ENCODE measurements at regions of chr2 and their contacts with region 1.

Region 1: DNA sequence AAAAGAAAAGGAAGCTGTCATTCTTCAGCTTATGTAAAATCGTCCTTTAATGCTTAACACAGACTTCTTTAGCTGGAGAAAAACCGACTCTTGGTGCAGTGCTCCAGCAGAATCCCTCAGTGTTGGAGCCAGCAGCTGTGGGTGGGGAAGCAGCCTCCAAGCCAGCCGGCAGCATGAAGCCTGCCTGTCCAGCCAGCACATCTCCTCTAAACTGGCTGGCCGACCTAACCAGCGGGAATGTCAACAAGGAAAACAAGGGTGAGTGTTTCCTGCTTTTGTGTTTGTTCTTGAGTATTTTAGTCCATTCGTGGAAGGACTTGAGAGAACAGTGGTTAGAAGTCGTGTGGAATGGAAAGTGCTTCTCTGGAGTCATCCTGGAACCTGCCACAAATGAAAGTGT is 38.9 kb downstream of the KDM3A start:
- DNase-seq: no peak
- ATAC-seq: no peak
- H3K4me3 ChIP-seq: no peak overlapping the region
- H3K4me3 Mint-ChIP-seq: no peak overlapping the region
- H3K27ac ChIP-seq: no peak overlapping the region
- H3K27ac Mint-ChIP-seq: peak overlapping the region in 7 of 9 donors; percentile 5 to 64 (median 12)
- H3K4me1 ChIP-seq: no peaks in the 10 kb centered on the region
- H3K4me1 Mint-ChIP-seq: peaks cover 2 to 55% (median 24%) of the 10 kb centered on the region in 7 donors
- H3K27me3 ChIP-seq: no peaks in the 10 kb centered on the region
- H3K27me3 Mint-ChIP-seq: no peaks in the 10 kb centered on the region

Region 2: DNA sequence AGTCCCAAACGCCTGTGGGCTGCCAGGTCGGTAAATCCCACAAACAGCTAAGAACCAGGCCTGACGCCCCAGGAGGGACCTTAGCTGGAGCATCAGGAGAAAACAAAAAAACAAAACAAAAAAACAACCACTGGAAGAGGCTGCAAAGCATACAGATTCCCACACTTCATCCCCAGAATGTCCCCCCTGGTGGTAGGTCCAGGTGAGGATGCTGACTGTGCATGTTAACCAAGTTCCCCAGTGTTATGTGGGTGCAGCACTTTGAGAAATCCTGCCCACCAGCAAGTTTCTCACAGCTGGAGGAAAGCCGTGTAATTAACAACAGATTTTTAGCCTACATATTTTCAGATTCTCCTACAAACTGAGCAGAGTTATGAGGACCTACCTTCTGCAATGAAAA is 606.4 kb before region 1 on chr2:
- CTCF ChIA-PET with region 1: no interaction called
- POLR2A ChIA-PET with region 1: no interaction called
- intact Hi-C with region 1: no loop called
- DNase-seq: no peak
- ATAC-seq: no peak
- H3K4me3 ChIP-seq: no peak overlapping the region
- H3K4me3 Mint-ChIP-seq: no peak overlapping the region
- H3K27ac ChIP-seq: no peak overlapping the region
- H3K27ac Mint-ChIP-seq: peak overlapping the region in 4 of 9 donors; percentile 17 to 78 (median 50)
- H3K4me1 ChIP-seq: peaks cover 0 to 16% of the 10 kb centered on the region in 2 donors
- H3K4me1 Mint-ChIP-seq: peaks cover 34 to 83% (median 71%) of the 10 kb centered on the region in 7 donors
- H3K27me3 ChIP-seq: no peaks in the 10 kb centered on the region
- H3K27me3 Mint-ChIP-seq: no peaks in the 10 kb centered on the region

Region 3: GRCh38 chr2:86347401-86347800 is 132.7 kb before region 1 on chr2:
- CTCF ChIA-PET with region 1: no interaction called
- POLR2A ChIA-PET with region 1: no interaction called
- intact Hi-C with region 1: no loop called
- DNase-seq: no peak
- ATAC-seq: no peak
- H3K4me3 ChIP-seq: no peak overlapping the region
- H3K4me3 Mint-ChIP-seq: no peak overlapping the region
- H3K27ac ChIP-seq: no peak overlapping the region
- H3K27ac Mint-ChIP-seq: no peak overlapping the region
- H3K4me1 ChIP-seq: no peaks in the 10 kb centered on the region
- H3K4me1 Mint-ChIP-seq: peaks cover 0 to 2% (median 0%) of the 10 kb centered on the region in 7 donors
- H3K27me3 ChIP-seq: no peaks in the 10 kb centered on the region
- H3K27me3 Mint-ChIP-seq: peaks cover 9 to 49% (median 23%) of the 10 kb centered on the region in 5 donors

Region 4: GRCh38 chr2:86426272-86426671 is 53.8 kb before region 1 on chr2:
- CTCF ChIA-PET with region 1: no interaction called
- POLR2A ChIA-PET with region 1: no interaction called
- intact Hi-C with region 1: no loop called
- DNase-seq: no peak
- ATAC-seq: no peak
- H3K4me3 ChIP-seq: no peak overlapping the region
- H3K4me3 Mint-ChIP-seq: no peak overlapping the region
- H3K27ac ChIP-seq: no peak overlapping the region
- H3K27ac Mint-ChIP-seq: no peak overlapping the region
- H3K4me1 ChIP-seq: no peaks in the 10 kb centered on the region
- H3K4me1 Mint-ChIP-seq: no peaks in the 10 kb centered on the region
- H3K27me3 ChIP-seq: peaks cover 0 to 4% of the 10 kb centered on the region in 2 donors
- H3K27me3 Mint-ChIP-seq: peaks cover 6 to 55% (median 24%) of the 10 kb centered on the region in 5 donors

Region 5: GRCh38 chr2:86464652-86465051 is 15.5 kb before region 1 on chr2:
- CTCF ChIA-PET with region 1: no interaction called
- POLR2A ChIA-PET with region 1: interaction called, 7 read pairs
- intact Hi-C with region 1: loop called in 1 of 2 experiments (anchors 2 kb)
- DNase-seq: no peak
- ATAC-seq: no peak
- H3K4me3 ChIP-seq: no peak overlapping the region
- H3K4me3 Mint-ChIP-seq: peak overlapping the region in 5 of 10 donors; percentile 3 to 60 (median 21)
- H3K27ac ChIP-seq: no peak overlapping the region
- H3K27ac Mint-ChIP-seq: peak overlapping the region; percentile 28 to 81 (median 73)
- H3K4me1 ChIP-seq: peaks cover 0 to 15% of the 10 kb centered on the region in 2 donors
- H3K4me1 Mint-ChIP-seq: peaks cover 29 to 79% (median 65%) of the 10 kb centered on the region in 7 donors
- H3K27me3 ChIP-seq: no peaks in the 10 kb centered on the region
- H3K27me3 Mint-ChIP-seq: no peaks in the 10 kb centered on the region

Measured in naive thymus-derived CD4-positive, alpha-beta T cell (primary cell).